ENCODE measurements at regions of chr9 and their contacts with region 1.

Region 1: DNA sequence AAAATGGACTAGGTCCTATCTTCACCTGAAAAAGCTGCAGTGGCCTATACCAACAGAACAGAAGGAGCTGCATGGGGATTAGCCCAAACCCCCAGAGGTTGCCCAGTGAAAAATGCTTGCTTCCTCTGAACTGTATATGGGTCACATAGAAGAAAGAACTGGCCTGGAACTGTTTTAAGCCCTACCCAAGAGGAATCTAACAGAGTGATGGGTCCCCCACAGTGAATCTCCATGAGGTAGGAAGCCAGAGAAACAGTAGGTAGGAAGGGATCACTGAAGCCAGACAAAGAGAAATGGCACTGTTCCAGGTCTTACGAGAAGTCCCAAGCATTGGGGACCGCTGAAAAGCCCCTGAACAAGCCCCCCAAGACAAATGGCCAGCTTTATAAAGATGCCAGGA is 28.8 kb upstream of the TRIM32 start:
- DNase-seq: no peak
- ATAC-seq: no peak
- H3K4me3 ChIP-seq: no peak overlapping the region
- H3K4me3 Mint-ChIP-seq: no peak overlapping the region
- H3K27ac ChIP-seq: no peak overlapping the region
- H3K27ac Mint-ChIP-seq: no peak overlapping the region
- H3K4me1 ChIP-seq: no peaks in the 10 kb centered on the region
- H3K4me1 Mint-ChIP-seq: no peaks in the 10 kb centered on the region
- H3K27me3 ChIP-seq: no peaks in the 10 kb centered on the region
- H3K27me3 Mint-ChIP-seq: no peaks in the 10 kb centered on the region

Region 2: GRCh38 chr9:116435706-116436105 is 222.6 kb before region 1 on chr9:
- CTCF ChIA-PET with region 1: no interaction called
- POLR2A ChIA-PET with region 1: no interaction called
- DNase-seq: no peak
- ATAC-seq: no peak
- H3K4me3 ChIP-seq: no peak overlapping the region
- H3K4me3 Mint-ChIP-seq: no peak overlapping the region
- H3K27ac ChIP-seq: no peak overlapping the region
- H3K27ac Mint-ChIP-seq: no peak overlapping the region
- H3K4me1 ChIP-seq: no peaks in the 10 kb centered on the region
- H3K4me1 Mint-ChIP-seq: no peaks in the 10 kb centered on the region
- H3K27me3 ChIP-seq: no peaks in the 10 kb centered on the region
- H3K27me3 Mint-ChIP-seq: no peaks in the 10 kb centered on the region

Region 3: GRCh38 chr9:116673375-116673774 is 15.1 kb after region 1 on chr9:
- CTCF ChIA-PET with region 1: no interaction called
- POLR2A ChIA-PET with region 1: no interaction called
- DNase-seq: no peak
- ATAC-seq: no peak
- H3K4me3 ChIP-seq: no peak overlapping the region
- H3K4me3 Mint-ChIP-seq: no peak overlapping the region
- H3K27ac ChIP-seq: no peak overlapping the region
- H3K27ac Mint-ChIP-seq: no peak overlapping the region
- H3K4me1 ChIP-seq: no peaks in the 10 kb centered on the region
- H3K4me1 Mint-ChIP-seq: no peaks in the 10 kb centered on the region
- H3K27me3 ChIP-seq: no peaks in the 10 kb centered on the region
- H3K27me3 Mint-ChIP-seq: no peaks in the 10 kb centered on the region

Region 4: DNA sequence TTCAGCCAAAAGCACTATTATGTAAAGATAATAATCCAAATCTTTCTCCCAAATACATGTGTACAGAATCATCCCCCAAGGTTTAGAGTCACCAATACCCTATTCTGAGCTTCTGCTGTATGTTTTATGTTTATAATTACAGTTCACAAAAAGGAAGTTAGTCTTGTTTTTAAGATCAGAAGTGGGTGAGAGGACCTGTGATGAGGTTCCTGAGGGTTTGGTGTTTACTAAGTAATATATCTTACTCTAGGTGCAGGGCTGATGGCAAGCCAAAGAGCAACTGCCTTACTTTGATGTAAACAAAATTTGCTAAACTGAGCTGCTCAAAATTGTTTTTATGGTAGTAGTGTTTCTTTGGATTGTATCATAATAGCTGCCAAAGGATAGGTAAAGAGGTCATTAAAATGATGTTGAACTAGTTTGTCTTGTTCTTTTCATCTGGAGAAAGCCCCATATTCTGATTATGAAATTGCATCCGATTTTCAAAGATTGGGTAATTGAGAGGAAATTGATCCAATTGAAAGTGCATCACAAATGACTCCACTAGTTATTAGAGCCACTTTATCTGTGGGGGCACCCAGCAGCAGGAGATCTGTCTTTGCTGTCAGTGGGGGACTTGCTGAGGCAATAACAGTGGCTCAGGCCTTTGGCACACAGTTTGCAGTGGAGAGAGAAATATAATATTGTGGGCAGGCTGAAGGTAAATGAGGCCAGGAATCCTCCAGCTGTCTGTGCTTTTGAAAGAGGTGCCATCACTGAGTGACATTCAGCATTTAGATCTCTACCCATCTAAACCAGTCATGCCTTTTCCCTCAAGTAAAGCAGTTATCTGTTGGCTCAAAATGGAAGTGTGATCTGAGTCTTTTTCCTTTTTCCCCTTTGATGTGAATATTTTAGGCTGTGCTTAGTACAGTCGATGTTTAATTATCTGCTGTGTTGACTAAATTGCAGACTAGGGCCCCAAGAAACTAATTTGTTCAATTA is 42.9 kb after region 1 on chr9:
- CTCF ChIA-PET with region 1: no interaction called
- POLR2A ChIA-PET with region 1: no interaction called
- DNase-seq: no peak
- ATAC-seq: peak in 1 of 4 experiments; percentile 19
- H3K4me3 ChIP-seq: no peak overlapping the region
- H3K4me3 Mint-ChIP-seq: peak overlapping the region in 2 of 3 donors; percentile 29 to 33
- H3K27ac ChIP-seq: no peak overlapping the region
- H3K27ac Mint-ChIP-seq: peak overlapping the region; percentile 72 to 83
- H3K4me1 ChIP-seq: peaks cover 0 to 13% of the 10 kb centered on the region in 2 experiments
- H3K4me1 Mint-ChIP-seq: peaks cover 31 to 38% (median 33%) of the 10 kb centered on the region in 3 donors
- H3K27me3 ChIP-seq: no peaks in the 10 kb centered on the region
- H3K27me3 Mint-ChIP-seq: no peaks in the 10 kb centered on the region

Region 5: DNA sequence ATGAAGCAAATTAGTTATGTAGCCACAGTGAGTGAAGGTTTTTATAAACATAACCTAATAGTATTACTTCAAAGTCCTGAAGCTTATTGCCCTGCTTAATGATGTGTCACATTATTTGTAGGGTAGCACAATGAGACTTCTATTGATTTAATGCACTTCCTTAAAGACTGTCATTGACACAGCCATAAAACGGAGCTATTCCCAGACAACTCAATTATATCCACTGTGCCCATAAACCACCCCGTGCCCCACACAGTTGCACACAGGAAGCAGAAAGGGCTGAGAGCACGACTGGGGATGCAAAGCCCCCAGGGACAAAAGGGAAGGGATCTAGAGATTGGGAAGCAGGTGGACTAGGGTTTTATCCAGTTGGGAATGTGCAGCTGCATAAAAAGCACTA is 65.9 kb after region 1 on chr9:
- CTCF ChIA-PET with region 1: interaction called in 1 of 2 experiments, 10 read pairs
- POLR2A ChIA-PET with region 1: no interaction called
- DNase-seq: no peak
- ATAC-seq: no peak
- H3K4me3 ChIP-seq: no peak overlapping the region
- H3K4me3 Mint-ChIP-seq: no peak overlapping the region
- H3K27ac ChIP-seq: no peak overlapping the region
- H3K27ac Mint-ChIP-seq: no peak overlapping the region
- H3K4me1 ChIP-seq: no peaks in the 10 kb centered on the region
- H3K4me1 Mint-ChIP-seq: no peaks in the 10 kb centered on the region
- H3K27me3 ChIP-seq: no peaks in the 10 kb centered on the region
- H3K27me3 Mint-ChIP-seq: peaks cover 6 to 10% of the 10 kb centered on the region in 2 donors

Region 6: DNA sequence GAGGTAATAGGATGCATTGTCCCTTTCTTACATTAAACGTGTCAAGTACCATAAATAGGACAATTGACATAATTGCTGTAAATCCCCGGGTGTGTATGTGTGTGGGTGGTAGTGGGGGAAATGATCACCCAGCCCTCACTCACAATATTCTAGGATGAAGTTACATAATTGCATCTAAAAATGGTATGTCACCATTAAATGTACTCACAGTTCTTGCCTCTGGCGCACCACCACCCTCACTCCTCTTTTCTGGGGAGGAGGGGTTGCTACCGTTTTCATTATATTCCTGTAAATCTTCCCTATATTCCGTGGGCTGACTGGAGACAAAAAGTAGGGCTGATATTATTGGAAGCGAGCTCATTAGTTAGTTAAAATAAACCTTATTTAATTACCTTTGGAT is 1609.8 kb after region 1 on chr9:
- CTCF ChIA-PET with region 1: no interaction called
- POLR2A ChIA-PET with region 1: interaction called in 1 of 2 experiments, 16 read pairs
- DNase-seq: no peak
- ATAC-seq: no peak
- H3K4me3 ChIP-seq: no peak overlapping the region
- H3K4me3 Mint-ChIP-seq: no peak overlapping the region
- H3K27ac ChIP-seq: no peak overlapping the region
- H3K27ac Mint-ChIP-seq: no peak overlapping the region
- H3K4me1 ChIP-seq: no peaks in the 10 kb centered on the region
- H3K4me1 Mint-ChIP-seq: no peaks in the 10 kb centered on the region
- H3K27me3 ChIP-seq: no peaks in the 10 kb centered on the region
- H3K27me3 Mint-ChIP-seq: no peaks in the 10 kb centered on the region

Measured in T-cell (primary cell).